Panc1 (cell line): ENCODE measurements at regions of chr3 and their contacts with region 1.

Region 1: DNA sequence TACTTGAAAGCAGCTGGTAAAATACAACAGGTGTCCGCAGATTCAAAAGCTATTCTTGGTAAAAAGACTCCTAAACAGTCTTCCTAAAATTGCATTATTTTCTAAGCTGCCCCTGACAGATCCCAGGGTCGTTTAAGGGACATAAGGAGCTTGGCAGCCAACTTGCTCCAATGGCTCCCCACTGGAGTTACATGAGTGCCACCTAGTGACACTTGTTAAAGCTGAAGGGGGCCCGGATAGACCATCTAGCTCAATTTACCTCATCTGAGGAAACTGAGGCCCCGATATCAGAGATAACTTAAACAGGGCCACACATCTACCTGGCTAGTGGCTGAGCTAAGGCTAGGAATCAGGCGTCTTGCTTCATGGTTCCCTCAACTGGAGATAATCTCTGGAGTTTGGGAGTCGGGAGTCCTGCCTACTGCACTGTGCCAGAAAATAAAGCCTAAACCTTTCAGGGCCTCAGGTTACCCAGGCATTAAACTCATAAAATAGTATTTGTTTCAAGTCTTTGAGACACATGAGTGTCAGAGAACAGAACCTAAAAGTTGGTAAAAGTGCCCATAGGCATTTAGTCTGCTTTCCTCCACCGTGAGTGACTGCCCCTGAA is 6.5 kb upstream of the TBC1D23 start:
- DNase-seq: peak; percentile 47
- ATAC-seq: peak; percentile 93
- H3K4me3 ChIP-seq: no peak overlapping the region
- H3K27ac ChIP-seq: no peak overlapping the region
- H3K4me1 ChIP-seq: no peaks in the 10 kb centered on the region
- H3K27me3 ChIP-seq: no peaks in the 10 kb centered on the region
- CTCF ChIP-seq: peak; percentile 92

Region 2: DNA sequence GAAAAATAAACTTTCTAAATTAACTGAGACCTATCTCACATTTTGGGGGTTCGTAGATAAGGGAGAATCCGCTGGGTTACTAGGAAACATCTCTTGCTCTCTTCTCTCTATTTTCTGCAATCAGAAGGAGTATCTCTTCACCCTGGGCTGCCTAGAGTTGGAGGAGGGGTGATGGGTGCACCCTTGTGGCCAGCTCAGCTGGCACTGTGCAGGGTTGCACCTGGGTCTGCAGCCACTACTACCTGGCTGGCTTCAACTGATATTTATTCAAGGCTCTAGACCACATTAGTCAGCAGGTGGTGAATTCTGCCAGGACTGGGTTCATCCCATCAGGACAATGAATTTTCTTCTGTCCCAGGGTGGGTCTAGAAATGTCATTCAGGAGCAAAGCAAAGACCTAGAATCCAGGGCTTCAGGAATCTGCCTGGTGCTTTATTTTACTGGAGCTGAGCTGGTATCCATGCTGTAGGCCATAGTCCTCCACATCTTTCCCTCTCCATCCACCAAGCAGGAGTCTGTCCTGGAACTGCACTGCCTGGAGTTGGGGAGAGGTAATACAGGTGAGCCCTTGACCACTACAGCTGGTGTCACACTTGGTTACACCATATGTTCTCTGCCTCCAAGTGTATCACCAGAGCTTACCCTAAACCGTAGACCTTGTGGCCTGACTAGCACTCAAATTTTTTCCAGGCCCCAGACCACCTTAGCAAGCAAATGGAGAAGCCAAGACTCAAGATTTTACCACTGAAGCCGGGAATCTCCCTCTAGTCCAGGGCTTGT is 1886.6 kb before region 1 on chr3:
- CTCF ChIA-PET with region 1: no interaction called
- POLR2A ChIA-PET with region 1: no interaction called
- in situ Hi-C with region 1: no loop called
- intact Hi-C with region 1: no loop called
- DNase-seq: no peak
- ATAC-seq: no peak
- H3K4me3 ChIP-seq: no peak overlapping the region
- H3K27ac ChIP-seq: no peak overlapping the region
- H3K4me1 ChIP-seq: no peaks in the 10 kb centered on the region
- H3K27me3 ChIP-seq: no peaks in the 10 kb centered on the region
- CTCF ChIP-seq: no peak

Region 3: GRCh38 chr3:99833617-99834205 is 420.6 kb before region 1 on chr3:
- CTCF ChIA-PET with region 1: interaction called, 27 read pairs
- POLR2A ChIA-PET with region 1: interaction called, 3 read pairs
- in situ Hi-C with region 1: no loop called
- intact Hi-C with region 1: loop called (anchors 2 kb)
- DNase-seq: no peak
- ATAC-seq: no peak
- H3K4me3 ChIP-seq: no peak overlapping the region
- H3K27ac ChIP-seq: no peak overlapping the region; the same call in 1 of the 2 replicates
- H3K4me1 ChIP-seq: no peaks in the 10 kb centered on the region
- H3K27me3 ChIP-seq: no peaks in the 10 kb centered on the region
- CTCF ChIP-seq: no peak

Region 4: GRCh38 chr3:99842826-99843589 is 411.3 kb before region 1 on chr3:
- CTCF ChIA-PET with region 1: interaction called, 29 read pairs
- POLR2A ChIA-PET with region 1: no interaction called
- in situ Hi-C with region 1: no loop called
- intact Hi-C with region 1: no loop called
- DNase-seq: no peak
- ATAC-seq: peak; percentile 87
- H3K4me3 ChIP-seq: no peak overlapping the region
- H3K27ac ChIP-seq: peak overlapping the region; percentile 64
- H3K4me1 ChIP-seq: peaks cover 16% of the 10 kb centered on the region
- H3K27me3 ChIP-seq: no peaks in the 10 kb centered on the region
- CTCF ChIP-seq: peak; percentile 79

Region 5: DNA sequence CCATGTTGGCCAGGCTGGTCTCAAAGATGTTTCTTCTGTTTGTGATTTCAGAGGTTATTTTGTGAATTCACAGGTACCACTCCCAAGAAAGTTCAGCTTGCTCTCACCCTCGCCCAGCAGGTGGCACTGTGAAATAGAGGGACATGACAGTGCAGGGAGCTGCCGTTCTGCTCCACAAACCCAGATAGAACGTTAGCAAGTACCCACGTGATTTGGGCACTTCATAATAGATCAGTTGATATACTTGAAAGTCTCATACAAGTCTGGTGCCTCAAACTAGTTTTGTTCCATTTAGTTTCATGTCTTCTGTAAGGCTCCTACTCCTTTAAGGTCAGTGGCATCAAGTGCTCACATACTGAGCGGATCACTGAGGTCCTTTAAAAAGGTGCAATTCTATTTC is 185.4 kb before region 1 on chr3:
- CTCF ChIA-PET with region 1: interaction called, 14 read pairs
- POLR2A ChIA-PET with region 1: no interaction called
- in situ Hi-C with region 1: no loop called
- intact Hi-C with region 1: loop called (anchors 1 kb)
- DNase-seq: no peak
- ATAC-seq: peak; percentile 89
- H3K4me3 ChIP-seq: no peak overlapping the region
- H3K27ac ChIP-seq: no peak overlapping the region
- H3K4me1 ChIP-seq: no peaks in the 10 kb centered on the region
- H3K27me3 ChIP-seq: no peaks in the 10 kb centered on the region
- CTCF ChIP-seq: peak; percentile 85

Region 6: DNA sequence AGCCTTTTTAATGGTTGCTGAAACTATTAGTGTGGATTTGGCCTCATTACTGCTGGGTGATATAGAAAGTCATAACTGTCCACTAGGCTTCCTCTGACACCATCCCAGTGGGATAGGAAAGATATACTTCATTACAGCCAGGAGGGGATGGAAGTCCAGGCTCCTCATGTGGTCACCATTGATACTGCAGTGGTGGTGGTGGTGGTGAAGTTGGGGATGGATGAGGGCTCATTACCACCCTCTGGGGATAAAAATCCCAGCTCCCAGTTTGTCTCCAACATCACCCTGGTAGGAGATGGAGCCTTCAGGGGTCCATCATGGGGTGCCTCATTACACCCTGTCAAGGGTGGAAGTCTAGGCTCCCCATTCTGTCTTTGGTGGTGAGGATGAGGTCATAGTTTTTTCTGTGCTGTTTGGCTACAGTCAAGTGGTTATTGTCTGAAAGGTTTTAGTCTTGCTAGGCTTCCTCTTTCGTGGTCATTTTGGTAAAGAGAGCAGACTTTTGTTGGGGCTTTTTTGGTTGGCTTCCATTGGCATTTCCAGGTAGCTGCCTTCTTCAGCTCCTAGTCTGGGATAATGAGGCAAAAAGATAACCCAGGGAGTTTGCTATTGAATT is 109.9 kb before region 1 on chr3:
- CTCF ChIA-PET with region 1: no interaction called
- POLR2A ChIA-PET with region 1: no interaction called
- in situ Hi-C with region 1: no loop called
- intact Hi-C with region 1: no loop called
- DNase-seq: no peak
- ATAC-seq: no peak
- H3K4me3 ChIP-seq: no peak overlapping the region
- H3K27ac ChIP-seq: no peak overlapping the region
- H3K4me1 ChIP-seq: no peaks in the 10 kb centered on the region
- H3K27me3 ChIP-seq: no peaks in the 10 kb centered on the region
- CTCF ChIP-seq: no peak

Region 7: GRCh38 chr3:100269410-100270217 is 15.3 kb after region 1 on chr3:
- CTCF ChIA-PET with region 1: interaction called, 10 read pairs
- POLR2A ChIA-PET with region 1: no interaction called
- in situ Hi-C with region 1: no loop called
- intact Hi-C with region 1: no loop called
- DNase-seq: peak; percentile 70
- ATAC-seq: peak; percentile 83
- H3K4me3 ChIP-seq: no peak overlapping the region
- H3K27ac ChIP-seq: no peak overlapping the region
- H3K4me1 ChIP-seq: no peaks in the 10 kb centered on the region
- H3K27me3 ChIP-seq: no peaks in the 10 kb centered on the region
- CTCF ChIP-seq: no peak